Activated CD4-positive, alpha-beta T cell treated with anti-CD3 and anti-CD28 coated beads, Interleukin-2, amount 10 ng/mL, durations not matched to agents 24 days and 14 days (primary cell): ENCODE measurements at regions of chr4 and their contacts with region 1.

Region 1: DNA sequence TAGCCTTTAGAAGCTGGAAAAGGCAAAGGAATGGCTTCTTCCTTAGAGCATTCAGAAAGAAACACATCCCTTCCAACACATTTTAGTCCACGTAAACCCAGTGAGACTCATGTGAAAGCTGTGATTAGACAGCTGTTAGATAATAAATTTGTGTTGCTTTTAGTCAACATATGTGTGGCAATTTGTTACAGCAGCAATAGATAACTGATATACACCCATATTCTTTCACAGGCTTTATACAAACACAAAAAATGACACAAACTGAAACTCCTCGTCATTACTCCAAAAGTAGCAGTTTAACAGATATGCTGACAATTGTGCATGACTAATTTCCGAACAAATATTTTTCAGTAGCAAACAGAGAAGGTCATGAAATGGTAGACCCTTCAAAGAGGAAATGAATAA is 65.3 kb downstream of the ANTXR2 start:
- DNase-seq: no peak
- H3K4me3 Mint-ChIP-seq: peak overlapping the region; percentile 51
- H3K27ac Mint-ChIP-seq: peak overlapping the region; percentile 85
- H3K4me1 Mint-ChIP-seq: peaks cover 53% of the 10 kb centered on the region
- H3K27me3 Mint-ChIP-seq: no peaks in the 10 kb centered on the region

Region 2: DNA sequence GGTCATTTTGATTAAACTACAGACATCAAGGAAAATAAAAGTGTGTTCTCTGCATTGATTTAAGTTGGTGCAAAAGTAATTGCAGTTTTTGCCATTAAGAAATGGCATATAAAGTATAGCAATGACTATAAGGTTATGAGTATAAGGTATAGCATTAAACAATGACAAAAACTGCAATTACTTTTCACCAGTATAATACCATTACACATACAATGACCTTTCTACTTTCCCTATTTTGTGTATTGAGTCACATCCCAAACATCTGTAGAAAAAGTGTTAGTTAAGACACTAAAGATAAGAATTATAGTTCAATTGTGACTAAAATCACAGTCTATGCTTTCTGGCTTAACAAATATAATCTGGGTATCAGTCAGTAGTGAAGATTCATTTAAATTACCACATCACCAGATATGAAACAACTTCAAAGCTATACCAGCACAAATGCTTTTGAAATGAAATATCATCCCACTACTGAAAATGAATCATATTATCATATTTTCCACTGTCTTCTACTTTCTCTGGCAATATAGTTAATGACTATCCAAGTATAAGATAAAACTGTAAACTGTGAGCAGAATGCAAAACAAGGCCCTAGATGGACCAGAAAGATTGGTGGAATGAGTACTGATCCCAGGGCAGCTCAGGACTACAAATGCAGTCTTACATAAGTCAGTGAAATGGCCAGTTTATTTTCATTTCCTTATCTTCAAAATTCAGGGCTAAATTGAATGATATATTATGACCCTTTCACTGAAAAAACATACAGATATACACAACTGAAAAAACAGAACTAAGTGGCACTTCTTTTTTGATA is 175.8 kb before region 1 on chr4:
- intact Hi-C with region 1: loop called (anchors 5 kb)
- DNase-seq: no peak
- H3K4me3 Mint-ChIP-seq: no peak overlapping the region
- H3K27ac Mint-ChIP-seq: no peak overlapping the region
- H3K4me1 Mint-ChIP-seq: no peaks in the 10 kb centered on the region
- H3K27me3 Mint-ChIP-seq: peaks cover 4% of the 10 kb centered on the region

Region 3: GRCh38 chr4:79987401-79987800 is 20.3 kb before region 1 on chr4:
- intact Hi-C with region 1: loop called (anchors 2 kb)
- DNase-seq: no peak
- H3K4me3 Mint-ChIP-seq: no peak overlapping the region
- H3K27ac Mint-ChIP-seq: no peak overlapping the region
- H3K4me1 Mint-ChIP-seq: peaks cover 11% of the 10 kb centered on the region
- H3K27me3 Mint-ChIP-seq: no peaks in the 10 kb centered on the region